GM12878 (cell line): ENCODE measurements at regions of chrX and their contacts with region 1.

Region 1: GRCh38 chrX:102863735-102864134 is 73.3 kb upstream of the RAB40AL start:
- DNase-seq: peak; percentile 45
- ATAC-seq: peak; percentile 98
- H3K4me3 ChIP-seq: no peak overlapping the region
- H3K27ac ChIP-seq: no peak overlapping the region
- H3K4me1 ChIP-seq: no peaks in the 10 kb centered on the region
- H3K27me3 ChIP-seq: no peaks in the 10 kb centered on the region
- CTCF ChIP-seq: peak; percentile 84 to 87 (median 86)
- EP300 ChIP-seq: no peak
- POLR2A ChIP-seq: no peak
- RAD21 ChIP-seq: peak; percentile 80

Region 2: GRCh38 chrX:102067966-102068708 is 795.6 kb before region 1 on chrX:
- CTCF ChIA-PET with region 1: interaction called, 12 read pairs
- POLR2A ChIA-PET with region 1: no interaction called
- RAD21 ChIA-PET with region 1: no interaction called
- SMC1A ChIA-PET with region 1: interaction called, 4 read pairs
- in situ Hi-C with region 1: no loop called
- intact Hi-C with region 1: no loop called
- DNase-seq: peak; percentile 1
- ATAC-seq: 0 out of 3 replicates have a peak, but pooled peaks have one; percentile 39
- H3K4me3 ChIP-seq: no peak overlapping the region
- H3K27ac ChIP-seq: no peak overlapping the region
- H3K4me1 ChIP-seq: no peaks in the 10 kb centered on the region
- H3K27me3 ChIP-seq: no peaks in the 10 kb centered on the region
- CTCF ChIP-seq: peak; percentile 51 to 67 (median 58); a peak in 5 of 6 replicates
- EP300 ChIP-seq: no peak
- POLR2A ChIP-seq: no peak
- RAD21 ChIP-seq: peak; percentile 71

Region 3: GRCh38 chrX:102129473-102129872 is 734.3 kb before region 1 on chrX:
- CTCF ChIA-PET with region 1: no interaction called
- POLR2A ChIA-PET with region 1: no interaction called
- RAD21 ChIA-PET with region 1: interaction called, 3 read pairs
- SMC1A ChIA-PET with region 1: no interaction called
- in situ Hi-C with region 1: loop called (anchors 25 kb)
- intact Hi-C with region 1: no loop called
- DNase-seq: no peak
- ATAC-seq: no peak
- H3K4me3 ChIP-seq: no peak overlapping the region
- H3K27ac ChIP-seq: no peak overlapping the region
- H3K4me1 ChIP-seq: no peaks in the 10 kb centered on the region
- H3K27me3 ChIP-seq: no peaks in the 10 kb centered on the region
- CTCF ChIP-seq: peak in 2 of 3 experiments; percentile 32 to 36; a peak in 3 of 6 replicates
- EP300 ChIP-seq: no peak
- POLR2A ChIP-seq: no peak
- RAD21 ChIP-seq: peak; percentile 47; the same call in 1 of the 2 replicates

Region 4: DNA sequence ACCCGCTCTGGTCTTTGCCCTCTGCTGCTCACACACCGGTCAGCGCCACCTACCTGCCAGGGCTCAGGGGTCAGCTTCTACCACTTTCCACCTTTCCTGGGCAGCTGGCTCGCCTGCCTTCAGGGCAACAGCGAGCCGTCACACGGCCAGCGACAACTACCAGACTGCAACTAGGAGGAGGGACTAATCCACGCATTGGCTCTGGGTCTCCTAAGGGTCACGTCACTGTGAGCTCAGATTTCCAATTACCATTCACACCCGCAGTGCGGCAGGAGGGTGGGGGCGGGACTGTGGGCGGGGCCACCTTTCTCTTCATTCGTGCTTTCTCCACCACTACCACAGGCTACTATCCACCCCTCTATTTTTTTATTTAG is 707.9 kb before region 1 on chrX and contains the start of gene BEX5:
- CTCF ChIA-PET with region 1: no interaction called
- POLR2A ChIA-PET with region 1: no interaction called
- RAD21 ChIA-PET with region 1: no interaction called
- SMC1A ChIA-PET with region 1: no interaction called
- in situ Hi-C with region 1: no loop called
- intact Hi-C with region 1: loop called (anchors 10 kb)
- DNase-seq: no peak
- ATAC-seq: peak; percentile 42; the same call in 2 of the 3 replicates
- H3K4me3 ChIP-seq: peak within 1 kb of the TSS; percentile 50
- H3K27ac ChIP-seq: no peak within 1 kb of the TSS
- H3K4me1 ChIP-seq: no peaks in the 10 kb centered on the region
- H3K27me3 ChIP-seq: no peaks in the 10 kb centered on the region
- CTCF ChIP-seq: no peak
- EP300 ChIP-seq: no peak
- POLR2A ChIP-seq: 0 out of 2 replicates have a peak, but pooled peaks have one; percentile 42
- RAD21 ChIP-seq: no peak
- polyA plus RNA-seq, gene BEX5: 0.34 to 0.79 TPM

Region 5: GRCh38 chrX:102515975-102516941 is 347.5 kb before region 1 on chrX and contains the start of gene TMSB15A:
- CTCF ChIA-PET with region 1: no interaction called
- POLR2A ChIA-PET with region 1: no interaction called
- RAD21 ChIA-PET with region 1: no interaction called
- SMC1A ChIA-PET with region 1: no interaction called
- in situ Hi-C with region 1: no loop called
- intact Hi-C with region 1: loop called (anchors 5 kb)
- DNase-seq: no peak
- ATAC-seq: no peak
- H3K4me3 ChIP-seq: no peak within 1 kb of the TSS
- H3K27ac ChIP-seq: no peak within 1 kb of the TSS
- H3K4me1 ChIP-seq: no peaks in the 10 kb centered on the region
- H3K27me3 ChIP-seq: no peaks in the 10 kb centered on the region
- CTCF ChIP-seq: no peak
- EP300 ChIP-seq: no peak
- POLR2A ChIP-seq: no peak
- RAD21 ChIP-seq: no peak
- polyA plus RNA-seq, gene TMSB15A: not detected